ENCODE measurements at regions of chr19 and their contacts with region 1.

Region 1: GRCh38 chr19:12696366-12697335 is at the start of gene FBXW9:
- DNase-seq: peak; percentile 94 to 99 (median 97)
- ATAC-seq: peak; percentile 92 to 96
- H3K4me3 Mint-ChIP-seq: peak within 1 kb of the TSS; percentile 87 to 96 (median 92)
- H3K27ac Mint-ChIP-seq: peak within 1 kb of the TSS; percentile 93 to 99 (median 97)
- H3K4me1 Mint-ChIP-seq: peaks cover 4 to 19% (median 8%) of the 10 kb centered on the region in 4 donors
- H3K27me3 Mint-ChIP-seq: no peaks in the 10 kb centered on the region
- polyA plus RNA-seq, gene FBXW9: 4.3 to 5.7 (median 5.4) TPM

Region 2: DNA sequence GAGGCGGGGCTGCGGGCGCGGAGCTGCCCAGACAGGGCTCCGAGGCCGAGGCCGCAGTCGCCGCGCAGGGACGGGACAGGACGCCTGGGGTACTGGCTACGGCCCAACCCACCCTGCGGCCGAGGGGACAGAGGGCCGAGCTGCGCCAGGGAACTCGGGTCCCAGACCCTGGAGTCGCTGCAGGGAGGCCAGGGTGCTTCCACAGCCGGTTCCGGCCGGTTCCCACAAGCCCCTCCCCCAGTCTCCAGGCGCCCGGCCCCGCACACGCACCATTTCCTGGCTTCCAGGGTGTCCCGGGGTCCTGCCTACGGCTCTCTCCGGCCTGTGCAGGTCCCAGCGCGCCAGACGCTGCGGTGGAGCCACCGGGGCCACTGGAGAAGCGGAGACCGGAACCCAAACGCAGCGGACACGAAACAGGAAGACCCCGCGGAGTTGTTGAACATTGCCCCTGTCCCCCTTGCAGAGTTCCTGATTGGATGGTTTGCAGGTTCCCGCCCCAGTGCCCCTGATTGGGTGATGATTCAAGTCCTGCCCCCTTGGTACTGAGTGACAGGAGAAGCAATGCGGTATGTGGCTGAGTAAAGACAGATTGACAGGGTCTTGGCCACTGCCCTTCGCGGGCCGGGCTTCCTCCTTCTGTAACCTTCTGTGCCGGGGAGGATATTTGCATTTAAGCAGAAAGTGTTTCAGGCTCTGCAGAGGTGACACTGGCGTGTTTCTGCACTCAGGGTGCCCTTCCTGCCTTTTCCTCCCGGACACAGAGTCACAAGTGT is 145.4 kb before region 1 on chr19 and contains the start of gene ZNF564:
- POLR2A ChIA-PET with region 1: interaction called, 11 read pairs
- DNase-seq: peak; percentile 72 to 98 (median 94)
- ATAC-seq: peak; percentile 98 to 99
- H3K4me3 Mint-ChIP-seq: peak within 1 kb of the TSS; percentile 95 to 100 (median 98)
- H3K27ac Mint-ChIP-seq: peak within 1 kb of the TSS; percentile 94 to 99 (median 97)
- H3K4me1 Mint-ChIP-seq: peaks cover 19 to 59% (median 48%) of the 10 kb centered on the region in 4 donors
- H3K27me3 Mint-ChIP-seq: peaks cover 0 to 2% (median 0%) of the 10 kb centered on the region in 5 donors
- polyA plus RNA-seq, gene ZNF564: 8.9 to 12.3 (median 10.0) TPM

Region 3: GRCh38 chr19:12681074-12681951 is 15.3 kb before region 1 on chr19 and contains the start of gene DHPS:
- POLR2A ChIA-PET with region 1: interaction called, 19 read pairs
- DNase-seq: peak; percentile 72 to 97 (median 89)
- ATAC-seq: peak; percentile 79 to 84
- H3K4me3 Mint-ChIP-seq: peak within 1 kb of the TSS; percentile 89 to 98 (median 96)
- H3K27ac Mint-ChIP-seq: peak within 1 kb of the TSS; percentile 89 to 98 (median 96)
- H3K4me1 Mint-ChIP-seq: peaks cover 17 to 37% (median 26%) of the 10 kb centered on the region in 4 donors
- H3K27me3 Mint-ChIP-seq: peaks cover 0 to 1% (median 0%) of the 10 kb centered on the region in 5 donors
- polyA plus RNA-seq, gene DHPS: 74.8 to 108 (median 88.9) TPM

Region 4: GRCh38 chr19:12722566-12723380 is 26.1 kb after region 1 on chr19:
- POLR2A ChIA-PET with region 1: interaction called, 16 read pairs
- DNase-seq: peak; percentile 83 to 98 (median 92)
- ATAC-seq: peak; percentile 88 to 92
- H3K4me3 Mint-ChIP-seq: peak overlapping the region; percentile 85 to 96 (median 92)
- H3K27ac Mint-ChIP-seq: peak overlapping the region; percentile 88 to 97 (median 93)
- H3K4me1 Mint-ChIP-seq: peaks cover 28 to 47% (median 40%) of the 10 kb centered on the region in 4 donors
- H3K27me3 Mint-ChIP-seq: no peaks in the 10 kb centered on the region

Region 5: DNA sequence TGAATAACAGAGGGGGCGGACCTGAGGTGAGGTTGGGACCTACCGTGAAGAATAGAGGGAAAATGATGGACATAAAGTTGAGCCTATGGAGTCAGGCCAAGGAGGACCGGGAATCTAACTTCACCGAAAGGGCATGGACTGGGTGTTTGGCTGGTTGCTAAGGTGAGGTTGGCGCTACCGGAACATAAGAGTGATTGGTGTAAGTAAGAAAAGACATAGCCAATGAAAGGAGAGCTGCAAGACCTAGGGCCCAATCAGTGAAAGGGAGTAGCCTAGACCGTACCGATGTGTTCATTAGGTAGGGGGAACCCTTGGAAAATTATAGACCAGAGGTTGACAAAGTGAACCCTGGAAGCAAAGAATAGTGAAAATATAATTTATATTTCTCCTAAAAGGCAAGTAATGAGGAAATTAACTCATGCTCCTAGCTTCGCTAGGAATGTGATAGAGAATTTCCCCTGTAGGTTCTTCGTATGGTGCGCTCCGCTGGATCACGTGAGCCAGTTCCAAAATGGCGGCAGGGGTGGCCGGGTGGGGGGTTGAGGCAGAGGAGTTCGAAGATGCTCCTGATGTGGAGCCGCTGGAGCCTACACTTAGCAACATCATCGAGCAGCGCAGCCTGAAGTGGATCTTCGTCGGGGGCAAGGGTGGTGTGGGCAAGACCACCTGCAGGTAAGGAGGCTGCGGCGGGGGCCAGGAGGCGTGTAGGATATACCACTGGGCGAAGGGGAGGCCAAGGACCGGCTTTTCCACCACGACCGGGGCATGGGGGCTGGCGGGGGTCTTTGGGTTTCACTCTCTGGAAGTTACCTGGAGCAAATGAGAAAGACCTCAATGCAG is 40.6 kb after region 1 on chr19 and contains the start of gene GET3:
- POLR2A ChIA-PET with region 1: interaction called, 10 read pairs
- DNase-seq: peak; percentile 63 to 92 (median 78)
- ATAC-seq: peak; percentile 83 to 87
- H3K4me3 Mint-ChIP-seq: peak within 1 kb of the TSS; percentile 96 to 100 (median 99)
- H3K27ac Mint-ChIP-seq: peak within 1 kb of the TSS; percentile 93 to 100 (median 98)
- H3K4me1 Mint-ChIP-seq: peaks cover 21 to 46% (median 43%) of the 10 kb centered on the region in 4 donors
- H3K27me3 Mint-ChIP-seq: no peaks in the 10 kb centered on the region
- polyA plus RNA-seq, gene GET3: 46.8 to 72.3 (median 55.7) TPM

Region 6: GRCh38 chr19:12815088-12815487 is 118.4 kb after region 1 on chr19:
- POLR2A ChIA-PET with region 1: no interaction called
- DNase-seq: no peak
- ATAC-seq: no peak
- H3K4me3 Mint-ChIP-seq: no peak overlapping the region
- H3K27ac Mint-ChIP-seq: no peak overlapping the region
- H3K4me1 Mint-ChIP-seq: no peaks in the 10 kb centered on the region
- H3K27me3 Mint-ChIP-seq: no peaks in the 10 kb centered on the region

Region 7: GRCh38 chr19:12913011-12913561 is 216.4 kb after region 1 on chr19:
- POLR2A ChIA-PET with region 1: interaction called, 11 read pairs
- DNase-seq: no peak
- ATAC-seq: no peak
- H3K4me3 Mint-ChIP-seq: peak overlapping the region in 4 of 10 donors; percentile 10 to 82 (median 52)
- H3K27ac Mint-ChIP-seq: peak overlapping the region; percentile 93 to 99 (median 98)
- H3K4me1 Mint-ChIP-seq: peaks cover 13 to 37% (median 17%) of the 10 kb centered on the region in 4 donors
- H3K27me3 Mint-ChIP-seq: no peaks in the 10 kb centered on the region

Measured in naive thymus-derived CD8-positive, alpha-beta T cell (primary cell).